ENCODE measurements at regions of chr2 and their contacts with region 1.

Region 1: DNA sequence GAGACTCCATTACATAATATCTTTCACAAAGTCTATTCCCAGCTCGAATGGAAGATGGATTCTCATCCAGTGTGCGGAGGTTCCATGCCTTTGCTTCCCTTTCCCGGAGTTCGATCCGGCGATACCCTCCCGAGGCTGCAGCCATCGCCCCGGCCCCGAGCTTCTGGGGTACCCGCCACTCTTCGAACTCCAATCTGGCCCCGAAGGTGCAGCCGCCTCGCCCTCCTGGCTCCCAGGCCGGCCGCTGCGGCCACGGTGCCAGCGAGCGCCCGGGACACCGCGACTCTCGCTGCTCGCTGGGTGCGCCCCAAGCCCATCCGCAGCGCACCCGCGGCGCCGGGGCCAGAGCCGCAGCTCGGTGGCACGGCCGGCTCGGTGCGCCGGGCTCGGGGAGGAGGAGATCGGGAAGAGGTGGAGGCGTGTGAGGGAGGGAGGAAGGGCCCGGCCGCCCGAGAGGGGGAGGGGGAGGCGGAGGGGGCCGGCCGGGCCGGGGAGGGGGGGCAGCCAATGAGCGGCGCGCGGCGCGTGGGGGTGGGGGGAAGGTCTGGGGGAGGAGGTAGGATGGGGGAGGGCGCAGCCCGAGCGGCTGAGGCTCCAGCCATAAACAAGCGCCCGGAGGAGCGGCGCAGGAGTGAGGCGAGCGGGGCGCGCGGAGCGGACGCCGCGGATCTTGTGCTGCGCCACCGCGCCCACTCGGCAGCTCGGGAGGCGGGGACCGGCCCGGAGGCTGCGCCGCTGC is at the start of gene CRIM1:
- DNase-seq: peak; percentile 70 to 82
- H3K4me3 ChIP-seq: peak within 1 kb of the TSS; percentile 67
- H3K27ac ChIP-seq: peak within 1 kb of the TSS; percentile 60
- H3K4me1 ChIP-seq: peaks cover 55% of the 10 kb centered on the region
- H3K27me3 ChIP-seq: no peaks in the 10 kb centered on the region
- CTCF ChIP-seq: no peak
- total RNA-seq, gene CRIM1: 133 and 154 TPM in 2 replicates

Region 2: GRCh38 chr2:35871672-35872071 is 483.6 kb before region 1 on chr2:
- CTCF ChIA-PET with region 1: no interaction called
- POLR2A ChIA-PET with region 1: no interaction called
- intact Hi-C with region 1: loop called (anchors 10 kb)
- DNase-seq: no peak
- H3K4me3 ChIP-seq: no peak overlapping the region
- H3K27ac ChIP-seq: no peak overlapping the region
- H3K4me1 ChIP-seq: no peaks in the 10 kb centered on the region
- H3K27me3 ChIP-seq: no peaks in the 10 kb centered on the region
- CTCF ChIP-seq: peak; percentile 27; the same call in 1 of the 2 replicates

Region 3: DNA sequence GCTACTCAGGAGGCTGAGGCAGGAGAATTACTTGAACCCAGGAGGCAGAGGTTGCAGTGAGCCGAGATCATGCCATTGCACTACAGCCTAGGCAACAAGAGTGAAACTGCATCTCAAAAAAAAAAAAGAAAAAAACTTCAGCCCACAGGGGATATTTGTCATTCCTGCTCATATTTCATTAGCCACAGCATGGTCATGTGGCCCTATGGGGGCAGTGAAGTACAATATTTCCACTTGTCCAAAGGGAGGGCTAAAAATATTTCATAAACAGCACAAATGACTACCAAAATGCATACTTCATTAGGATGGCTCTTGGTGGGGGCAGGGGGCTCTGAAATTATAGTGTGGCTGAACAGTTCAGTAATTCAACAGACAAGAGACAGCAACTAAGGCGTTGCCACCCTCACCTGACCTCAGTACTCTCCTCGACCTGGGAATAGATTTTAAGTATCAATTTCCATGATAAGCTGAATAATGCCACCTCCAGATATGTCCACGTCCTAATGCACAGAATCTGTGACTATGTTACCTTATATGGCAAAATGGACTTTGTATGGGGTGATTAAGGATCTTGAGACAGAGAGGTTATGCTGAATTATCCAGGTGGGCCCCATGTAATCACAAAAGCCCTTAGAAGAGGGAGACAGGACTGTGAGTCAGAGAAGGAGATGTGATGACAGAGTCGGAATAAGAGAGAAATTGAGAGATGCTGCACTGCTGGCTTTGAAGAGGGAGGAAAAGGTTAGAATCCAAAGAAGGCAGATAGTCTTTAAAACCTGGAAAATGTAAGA is 157.9 kb before region 1 on chr2:
- CTCF ChIA-PET with region 1: no interaction called
- POLR2A ChIA-PET with region 1: no interaction called
- intact Hi-C with region 1: no loop called
- DNase-seq: no peak
- H3K4me3 ChIP-seq: no peak overlapping the region
- H3K27ac ChIP-seq: no peak overlapping the region
- H3K4me1 ChIP-seq: 0 out of 2 replicates have a peak, but pooled peaks cover 3% of the 10 kb centered on the region
- H3K27me3 ChIP-seq: no peaks in the 10 kb centered on the region
- CTCF ChIP-seq: no peak

Region 4: GRCh38 chr2:36376319-36376765 is 21.0 kb after region 1 on chr2:
- CTCF ChIA-PET with region 1: interaction called, 9 read pairs
- POLR2A ChIA-PET with region 1: interaction called, 7 read pairs
- intact Hi-C with region 1: loop called (anchors 2 kb)
- DNase-seq: peak; percentile 29 to 37
- H3K4me3 ChIP-seq: no peak overlapping the region
- H3K27ac ChIP-seq: peak overlapping the region; percentile 88
- H3K4me1 ChIP-seq: peaks cover 98% of the 10 kb centered on the region
- H3K27me3 ChIP-seq: no peaks in the 10 kb centered on the region
- CTCF ChIP-seq: no peak

Region 5: DNA sequence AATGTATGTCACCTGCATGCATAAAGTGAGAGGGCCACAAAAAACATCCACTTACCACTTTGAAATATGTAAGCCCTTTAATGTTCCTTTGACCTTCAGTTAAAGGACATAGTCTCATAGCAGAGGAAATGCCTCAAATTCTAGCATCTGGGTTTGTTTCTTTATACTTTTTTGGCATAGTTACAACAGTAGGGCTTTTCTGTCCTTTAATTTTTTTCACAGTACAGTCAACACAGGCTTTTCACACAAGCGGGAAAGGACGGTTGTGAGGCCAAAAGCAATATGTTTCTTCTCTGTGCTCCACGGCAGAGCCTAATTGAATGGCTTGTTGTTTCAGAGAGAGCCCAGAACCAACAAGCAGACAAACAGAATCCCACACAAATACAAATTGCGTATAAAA is 57.9 kb after region 1 on chr2:
- CTCF ChIA-PET with region 1: no interaction called
- POLR2A ChIA-PET with region 1: interaction called, 3 read pairs
- intact Hi-C with region 1: loop called (anchors 1 kb)
- DNase-seq: no peak
- H3K4me3 ChIP-seq: no peak overlapping the region
- H3K27ac ChIP-seq: no peak overlapping the region
- H3K4me1 ChIP-seq: peaks cover 12% of the 10 kb centered on the region; the same call in 1 of the 2 replicates
- H3K27me3 ChIP-seq: no peaks in the 10 kb centered on the region
- CTCF ChIP-seq: no peak

Region 6: GRCh38 chr2:36507408-36507812 is 152.1 kb after region 1 on chr2:
- CTCF ChIA-PET with region 1: no interaction called
- POLR2A ChIA-PET with region 1: no interaction called
- intact Hi-C with region 1: loop called (anchors 2 kb)
- DNase-seq: peak in 1 of 2 experiments; percentile 38
- H3K4me3 ChIP-seq: no peak overlapping the region
- H3K27ac ChIP-seq: no peak overlapping the region
- H3K4me1 ChIP-seq: no peaks in the 10 kb centered on the region
- H3K27me3 ChIP-seq: no peaks in the 10 kb centered on the region
- CTCF ChIP-seq: peak; percentile 87

Region 7: GRCh38 chr2:36785179-36785795 is 430.0 kb after region 1 on chr2:
- CTCF ChIA-PET with region 1: no interaction called
- POLR2A ChIA-PET with region 1: no interaction called
- intact Hi-C with region 1: loop called (anchors 5 kb)
- DNase-seq: peak; percentile 66 to 80
- H3K4me3 ChIP-seq: no peak overlapping the region
- H3K27ac ChIP-seq: no peak overlapping the region
- H3K4me1 ChIP-seq: no peaks in the 10 kb centered on the region
- H3K27me3 ChIP-seq: peaks cover 10% of the 10 kb centered on the region; the same call in 1 of the 2 replicates
- CTCF ChIP-seq: peak; percentile 99

Region 8: GRCh38 chr2:36951574-36951973 is 596.3 kb after region 1 on chr2:
- CTCF ChIA-PET with region 1: no interaction called
- POLR2A ChIA-PET with region 1: no interaction called
- intact Hi-C with region 1: no loop called
- DNase-seq: peak in 1 of 2 experiments; percentile 89
- H3K4me3 ChIP-seq: no peak overlapping the region
- H3K27ac ChIP-seq: peak overlapping the region; percentile 88
- H3K4me1 ChIP-seq: peaks cover 36% of the 10 kb centered on the region
- H3K27me3 ChIP-seq: no peaks in the 10 kb centered on the region
- CTCF ChIP-seq: no peak

Measured in PC-9 (cell line).